Ovary (tissue), 10 donors: ENCODE measurements at regions of chr14 and their contacts with region 1.

Region 1: GRCh38 chr14:20855652-20856291 is 35.4 kb upstream of the RNASE3 start:
- DNase-seq: peak in 4 of 5 donors; percentile 21 to 39 (median 30)
- H3K4me3 ChIP-seq: no peak overlapping the region
- H3K27ac ChIP-seq: no peak overlapping the region
- H3K4me1 ChIP-seq: no peaks in the 10 kb centered on the region
- H3K27me3 ChIP-seq: no peaks in the 10 kb centered on the region
- CTCF ChIP-seq: peak in 2 of 3 donors; percentile 36 to 45
- EP300 ChIP-seq: no peak
- POLR2A ChIP-seq: no peak

Region 2: DNA sequence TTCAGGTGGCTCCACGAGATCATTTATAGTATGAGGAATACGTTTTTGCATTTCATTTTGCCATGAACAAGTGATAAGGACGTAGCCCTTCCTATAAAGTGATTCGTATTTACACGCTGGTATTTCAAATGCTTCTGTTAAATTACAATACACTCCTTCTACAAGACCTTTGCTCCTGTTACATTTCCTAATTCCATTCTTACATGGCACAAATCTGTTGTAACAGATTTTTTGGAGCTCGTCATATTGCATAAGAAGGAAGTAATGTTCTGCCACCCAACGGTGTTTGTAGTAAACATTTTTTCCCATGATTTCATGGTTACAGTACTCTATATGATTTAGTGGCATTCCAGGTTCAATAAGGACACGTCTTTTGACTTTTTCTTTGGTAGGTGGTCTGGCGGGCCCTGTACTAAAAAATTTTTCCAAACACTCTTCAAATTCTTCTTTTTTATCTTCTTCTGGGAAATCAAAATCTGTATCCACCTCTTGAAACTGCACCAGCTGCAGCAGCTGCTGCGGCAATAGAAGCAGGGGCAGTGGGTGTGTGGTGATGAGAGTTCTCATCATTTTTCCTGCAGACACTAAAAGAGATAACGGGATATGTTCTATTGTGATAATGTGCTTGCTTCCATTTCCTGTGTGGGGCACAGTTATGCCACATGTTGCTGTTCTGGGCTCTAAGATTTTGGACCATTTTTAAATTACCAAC is 299.1 kb before region 1 on chr14:
- intact Hi-C with region 1: no loop called
- DNase-seq: no peak
- H3K4me3 ChIP-seq: no peak overlapping the region
- H3K27ac ChIP-seq: no peak overlapping the region
- H3K4me1 ChIP-seq: peaks cover 1% of the 10 kb centered on the region
- H3K27me3 ChIP-seq: no peaks in the 10 kb centered on the region
- CTCF ChIP-seq: no peak
- EP300 ChIP-seq: no peak
- POLR2A ChIP-seq: no peak

Region 3: DNA sequence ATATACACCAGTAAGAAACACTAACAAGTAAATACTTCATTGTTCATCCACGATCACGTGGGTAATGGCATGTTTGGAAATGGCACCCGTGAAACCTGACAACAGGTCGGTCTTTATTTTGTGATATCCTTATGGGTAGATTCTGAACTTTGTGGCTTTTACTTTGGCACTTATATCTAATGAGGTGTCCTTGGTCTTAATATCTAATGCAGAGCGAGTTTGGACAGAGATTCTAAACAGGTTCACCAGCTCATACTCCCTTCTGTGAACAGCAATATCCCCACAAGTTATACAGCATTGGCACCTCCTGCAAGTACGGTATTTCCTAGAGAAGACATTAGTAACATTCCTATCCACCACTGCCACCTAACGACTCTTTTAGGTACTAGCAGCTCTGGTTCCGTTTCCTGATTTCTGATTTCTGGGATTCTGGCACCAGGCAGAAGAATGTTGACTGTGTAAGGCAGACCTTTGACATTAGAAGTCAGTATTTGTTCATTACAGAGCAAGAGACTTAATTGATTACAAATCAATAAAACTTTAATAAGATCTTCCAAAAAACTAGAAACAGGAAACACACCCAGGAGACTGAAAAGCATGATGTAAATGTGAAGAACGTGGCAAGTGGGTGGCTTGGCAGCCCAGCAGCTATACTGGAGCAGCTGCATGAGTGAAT is 164.8 kb before region 1 on chr14:
- intact Hi-C with region 1: loop called in 1 of 4 experiments (anchors 10 kb)
- DNase-seq: peak in 1 of 5 donors; percentile 58
- H3K4me3 ChIP-seq: no peak overlapping the region
- H3K27ac ChIP-seq: no peak overlapping the region
- H3K4me1 ChIP-seq: peaks cover 6% of the 10 kb centered on the region
- H3K27me3 ChIP-seq: no peaks in the 10 kb centered on the region
- CTCF ChIP-seq: peak in 2 of 3 donors; percentile 76 to 80
- EP300 ChIP-seq: no peak
- POLR2A ChIP-seq: no peak

Region 4: GRCh38 chr14:20714593-20715250 is 141.1 kb before region 1 on chr14:
- intact Hi-C with region 1: loop called in 1 of 4 experiments (anchors 10 kb)
- DNase-seq: peak in 4 of 5 donors; percentile 14 to 50 (median 35)
- H3K4me3 ChIP-seq: no peak overlapping the region
- H3K27ac ChIP-seq: no peak overlapping the region
- H3K4me1 ChIP-seq: no peaks in the 10 kb centered on the region
- H3K27me3 ChIP-seq: no peaks in the 10 kb centered on the region
- CTCF ChIP-seq: no peak
- EP300 ChIP-seq: no peak
- POLR2A ChIP-seq: no peak

Region 5: DNA sequence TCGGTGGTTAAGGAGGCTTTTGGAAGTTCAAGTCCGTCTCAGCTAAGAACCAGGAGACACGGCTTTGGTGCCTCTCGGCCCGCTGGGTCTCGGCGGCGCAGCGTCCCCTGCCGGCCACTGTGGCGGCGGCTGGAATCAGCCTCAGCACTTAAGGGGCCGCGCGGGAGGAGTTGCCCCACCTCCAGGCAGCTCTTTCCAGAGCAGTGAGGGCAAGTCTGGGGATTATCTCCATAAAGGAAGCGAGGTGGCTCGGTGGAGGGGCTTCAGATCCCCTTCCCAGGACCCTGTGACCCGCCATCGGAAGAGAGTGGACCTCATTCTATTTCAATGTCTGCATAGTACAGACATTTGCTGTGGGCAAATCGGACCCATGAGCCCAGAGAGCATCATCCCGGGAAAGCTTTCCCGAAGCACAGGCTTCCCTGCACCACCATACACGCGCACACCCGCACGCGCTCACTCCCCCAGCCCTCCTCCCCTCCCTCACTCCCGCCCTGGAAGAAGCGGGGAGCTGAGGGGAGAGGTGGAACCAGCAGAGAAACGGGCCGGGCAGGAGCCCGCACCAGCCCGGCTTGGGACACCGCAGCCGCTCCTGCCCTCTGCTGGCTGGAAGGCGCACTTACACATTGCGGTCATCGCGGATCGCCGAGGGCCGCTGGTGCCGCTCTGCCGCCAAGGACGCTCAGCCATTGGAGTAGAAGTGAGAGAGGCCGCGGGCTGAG is 115.4 kb after region 1 on chr14:
- intact Hi-C with region 1: loop called in 3 of 4 experiments (anchors 5 to 10 kb)
- DNase-seq: peak; percentile 80 to 92 (median 86)
- H3K4me3 ChIP-seq: peak overlapping the region; percentile 58
- H3K27ac ChIP-seq: peak overlapping the region; percentile 74 to 86
- H3K4me1 ChIP-seq: no peaks in the 10 kb centered on the region
- H3K27me3 ChIP-seq: no peaks in the 10 kb centered on the region
- CTCF ChIP-seq: peak; percentile 83 to 87 (median 83)
- EP300 ChIP-seq: no peak
- POLR2A ChIP-seq: no peak

Region 6: GRCh38 chr14:21024585-21025370 is 169.0 kb after region 1 on chr14 and contains the start of gene NDRG2:
- intact Hi-C with region 1: no loop called
- DNase-seq: peak; percentile 86 to 93 (median 88)
- H3K4me3 ChIP-seq: peak within 1 kb of the TSS; percentile 93
- H3K27ac ChIP-seq: peak within 1 kb of the TSS; percentile 90 to 97
- H3K4me1 ChIP-seq: peaks cover 9% of the 10 kb centered on the region
- H3K27me3 ChIP-seq: no peaks in the 10 kb centered on the region
- CTCF ChIP-seq: no peak
- EP300 ChIP-seq: no peak
- POLR2A ChIP-seq: no peak
- total RNA-seq, gene NDRG2: 355 to 703 (median 417) TPM

Region 7: GRCh38 chr14:21103710-21104447 is 248.1 kb after region 1 on chr14:
- intact Hi-C with region 1: loop called in 1 of 4 experiments (anchors 10 kb)
- DNase-seq: peak; percentile 95 to 97 (median 96)
- H3K4me3 ChIP-seq: peak overlapping the region; percentile 57
- H3K27ac ChIP-seq: peak overlapping the region; percentile 93 to 96
- H3K4me1 ChIP-seq: peaks cover 4% of the 10 kb centered on the region
- H3K27me3 ChIP-seq: no peaks in the 10 kb centered on the region
- CTCF ChIP-seq: peak; percentile 77 to 95 (median 92)
- EP300 ChIP-seq: no peak
- POLR2A ChIP-seq: peak; percentile 69

Region 8: DNA sequence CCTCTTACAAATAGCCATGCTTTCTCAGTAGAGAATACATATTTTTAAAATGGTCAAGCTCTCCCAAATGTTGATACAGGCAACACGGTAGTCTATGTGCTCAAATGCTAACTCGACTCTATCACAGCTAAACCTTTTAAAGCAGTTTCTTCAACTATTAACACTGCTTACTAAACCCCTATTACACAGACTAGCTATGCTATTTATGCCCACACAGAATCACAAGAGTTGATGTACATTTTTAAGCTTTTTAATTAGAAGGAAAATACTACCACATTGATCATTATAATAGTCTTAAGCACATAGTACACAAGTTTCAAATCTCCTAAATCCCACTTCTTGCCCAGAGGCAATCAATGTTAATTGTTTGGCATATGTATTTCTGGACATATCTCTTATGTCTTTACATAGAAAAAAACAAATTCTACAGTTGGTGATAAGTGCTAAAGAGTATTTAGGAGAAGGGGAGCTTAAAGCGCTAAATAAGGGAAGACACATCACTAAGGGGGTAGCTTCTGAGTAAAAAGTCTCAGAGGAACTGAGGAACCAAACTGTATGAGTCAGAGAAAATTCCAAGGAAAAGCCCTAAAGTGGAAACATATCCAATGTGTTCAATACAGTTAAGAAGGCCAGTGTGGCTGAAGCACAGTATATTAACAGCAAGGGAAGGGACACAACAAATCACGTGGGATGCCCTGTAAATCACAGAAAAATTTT is 399.8 kb after region 1 on chr14:
- intact Hi-C with region 1: no loop called
- DNase-seq: no peak
- H3K4me3 ChIP-seq: no peak overlapping the region
- H3K27ac ChIP-seq: no peak overlapping the region
- H3K4me1 ChIP-seq: peaks cover 13% of the 10 kb centered on the region
- H3K27me3 ChIP-seq: no peaks in the 10 kb centered on the region
- CTCF ChIP-seq: no peak
- EP300 ChIP-seq: no peak
- POLR2A ChIP-seq: no peak

Region 9: GRCh38 chr14:21414137-21414631 is 558.4 kb after region 1 on chr14:
- intact Hi-C with region 1: no loop called
- DNase-seq: no peak
- H3K4me3 ChIP-seq: no peak overlapping the region
- H3K27ac ChIP-seq: no peak overlapping the region
- H3K4me1 ChIP-seq: no peaks in the 10 kb centered on the region
- H3K27me3 ChIP-seq: no peaks in the 10 kb centered on the region
- CTCF ChIP-seq: no peak
- EP300 ChIP-seq: no peak
- POLR2A ChIP-seq: no peak